ENCODE measurements at regions of chr19 and their contacts with region 1.

Region 1: GRCh38 chr19:5369962-5370367 is 29.4 kb upstream of the PTPRS start:
- DNase-seq: peak; percentile 24 to 73 (median 58)
- H3K4me3 ChIP-seq: no peak overlapping the region
- H3K27ac ChIP-seq: no peak overlapping the region
- H3K4me1 ChIP-seq: no peaks in the 10 kb centered on the region
- H3K27me3 ChIP-seq: no peaks in the 10 kb centered on the region
- CTCF ChIP-seq: peak; percentile 28 to 53 (median 42)
- POLR2A ChIP-seq: no peak

Region 2: DNA sequence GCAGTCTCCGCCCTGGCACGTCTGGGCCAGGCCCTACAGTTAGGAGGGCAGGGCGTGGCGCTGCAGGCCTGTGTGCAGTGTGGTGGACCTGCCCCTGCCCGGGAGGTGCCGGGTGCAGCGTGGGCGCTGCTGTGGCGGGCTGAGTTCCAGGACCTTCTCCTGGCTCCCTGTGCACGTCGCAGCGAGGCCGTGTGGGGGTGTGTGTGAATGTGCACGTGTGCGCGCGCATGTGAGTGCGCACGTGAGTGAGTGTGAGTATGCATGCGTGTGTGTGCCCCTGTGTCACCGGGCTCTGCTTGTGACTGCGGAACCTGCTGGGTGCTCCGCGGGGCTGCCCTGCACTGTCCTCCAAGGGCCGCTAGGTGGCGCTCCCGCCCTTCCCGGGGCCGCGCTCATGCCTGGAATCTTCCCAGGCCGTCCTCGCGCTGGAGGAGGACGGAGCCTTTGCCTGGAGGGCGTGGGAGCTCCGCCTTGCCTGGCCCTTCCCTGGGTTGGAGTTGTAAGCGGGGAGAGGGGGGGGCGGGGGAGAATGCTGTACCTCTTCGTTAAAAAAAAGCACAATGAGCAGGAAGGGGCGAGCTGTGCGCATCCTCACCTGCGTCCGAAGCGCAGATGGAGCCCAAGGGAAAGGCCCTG is 321.8 kb before region 1 on chr19:
- intact Hi-C with region 1: loop called (anchors 10 kb)
- DNase-seq: peak; percentile 79 to 92 (median 87)
- H3K4me3 ChIP-seq: peak overlapping the region in 1 of 4 donors; percentile 9
- H3K27ac ChIP-seq: peak overlapping the region in 3 of 5 donors; percentile 51 to 80 (median 73)
- H3K4me1 ChIP-seq: peaks cover 15 to 37% of the 10 kb centered on the region in 2 donors
- H3K27me3 ChIP-seq: no peaks in the 10 kb centered on the region
- CTCF ChIP-seq: peak; percentile 97 to 100 (median 98)
- POLR2A ChIP-seq: no peak

Region 3: DNA sequence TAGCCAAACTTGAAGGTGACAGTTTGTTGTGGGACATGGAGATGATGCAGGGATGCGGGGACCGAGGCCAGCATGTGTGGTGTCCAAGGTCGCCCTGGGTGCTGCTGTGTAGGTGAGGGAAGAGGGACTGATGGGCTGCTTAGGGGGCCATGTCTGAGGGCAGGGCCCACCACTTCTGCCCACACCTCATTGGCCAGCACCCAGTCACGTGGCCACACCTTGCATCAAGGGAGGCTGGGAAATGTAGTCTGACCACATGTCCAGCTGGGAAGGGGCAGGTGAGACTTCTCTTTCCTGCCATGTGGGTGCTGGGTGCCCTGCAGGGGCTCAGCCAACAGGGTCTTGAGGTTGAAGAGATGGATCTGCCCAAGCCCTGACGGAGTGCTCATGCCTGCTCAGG is 312.1 kb before region 1 on chr19:
- intact Hi-C with region 1: loop called in 1 of 2 experiments (anchors 10 kb)
- DNase-seq: no peak
- H3K4me3 ChIP-seq: no peak overlapping the region
- H3K27ac ChIP-seq: no peak overlapping the region
- H3K4me1 ChIP-seq: no peaks in the 10 kb centered on the region
- H3K27me3 ChIP-seq: no peaks in the 10 kb centered on the region
- CTCF ChIP-seq: no peak
- POLR2A ChIP-seq: no peak

Region 4: GRCh38 chr19:5577785-5578493 is 208.0 kb after region 1 on chr19:
- intact Hi-C with region 1: loop called in 1 of 2 experiments (anchors 10 kb)
- DNase-seq: peak in 6 of 7 donors; percentile 54 to 78 (median 65)
- H3K4me3 ChIP-seq: no peak overlapping the region
- H3K27ac ChIP-seq: no peak overlapping the region
- H3K4me1 ChIP-seq: peaks cover 0 to 7% of the 10 kb centered on the region in 2 donors
- H3K27me3 ChIP-seq: no peaks in the 10 kb centered on the region
- CTCF ChIP-seq: peak; percentile 76 to 100 (median 92)
- POLR2A ChIP-seq: no peak

Measured in adrenal gland (tissue), 19 donors.